ENCODE measurements at regions of chr12 and their contacts with region 1.

Region 1: DNA sequence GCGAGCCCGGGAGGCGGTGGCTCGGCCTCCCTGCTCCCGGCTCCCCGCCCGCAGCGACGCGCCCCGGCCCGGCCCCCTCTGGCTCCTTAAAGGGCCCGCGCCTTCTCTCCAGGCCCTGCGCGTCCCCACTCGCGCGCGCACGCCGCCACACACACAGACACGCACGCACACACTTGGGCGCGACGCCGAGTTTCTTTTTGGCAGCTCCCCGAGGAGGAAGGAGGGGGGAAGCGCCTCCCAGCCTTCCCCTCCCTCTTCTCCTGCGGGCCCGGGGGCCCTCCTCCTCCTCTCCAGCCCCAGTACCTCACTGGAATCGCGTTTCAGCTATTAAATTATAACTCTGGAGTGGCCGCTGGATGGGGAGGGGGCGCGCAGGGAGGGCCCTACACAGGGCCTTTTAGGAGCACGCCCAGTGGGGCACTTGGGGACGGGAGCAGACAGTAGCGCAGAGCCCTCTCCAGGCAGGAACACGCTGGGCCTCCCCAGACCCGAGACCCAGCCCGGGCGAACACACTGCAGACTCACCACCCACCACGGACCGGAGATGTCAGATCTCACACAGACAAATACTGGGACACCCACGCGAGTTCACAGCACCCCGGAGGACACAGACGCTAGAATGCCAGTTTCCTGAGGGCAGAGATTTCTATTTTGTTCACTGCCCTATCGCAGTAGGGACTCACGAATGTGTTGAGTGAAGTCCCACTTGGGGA is 405 bp upstream of the NCOR2 start:
- DNase-seq: peak; percentile 77 to 99 (median 92)

Region 2: DNA sequence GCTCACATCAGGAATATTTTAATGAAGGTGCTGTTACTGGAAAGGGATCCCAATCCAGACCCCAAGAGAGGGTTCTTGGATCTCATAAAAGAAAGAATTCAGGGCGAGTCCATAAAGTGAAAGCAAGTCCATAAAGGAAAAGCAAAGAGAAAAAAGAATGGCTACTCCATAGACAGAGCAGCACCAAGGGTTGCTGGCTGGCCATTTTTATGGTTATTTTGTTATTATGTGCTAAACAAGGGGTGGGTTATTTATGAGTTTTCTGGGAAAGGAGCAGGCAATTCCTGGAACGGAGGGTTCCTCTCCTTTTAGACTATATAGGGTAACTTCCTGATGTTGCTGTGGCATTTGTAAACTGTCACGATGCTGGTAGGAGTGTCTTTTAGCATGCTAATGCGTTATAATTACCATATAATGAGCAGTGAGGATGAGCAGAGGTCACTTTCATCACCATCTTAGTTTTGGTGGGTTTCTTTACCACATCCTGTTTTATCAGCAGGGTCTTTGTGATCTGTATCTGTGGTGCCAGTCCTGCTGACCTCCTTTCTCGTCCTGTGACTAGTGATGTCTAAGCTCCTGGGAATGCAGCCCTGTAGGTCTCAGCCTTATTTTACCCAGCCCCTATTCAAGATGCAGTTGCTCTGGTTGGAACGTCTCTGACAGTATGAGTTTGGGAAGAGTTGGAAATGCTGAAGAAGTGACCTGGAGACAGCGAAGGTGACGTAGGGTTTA is 494.3 kb before region 1 on chr12:
- intact Hi-C with region 1: no loop called
- DNase-seq: no peak

Region 3: DNA sequence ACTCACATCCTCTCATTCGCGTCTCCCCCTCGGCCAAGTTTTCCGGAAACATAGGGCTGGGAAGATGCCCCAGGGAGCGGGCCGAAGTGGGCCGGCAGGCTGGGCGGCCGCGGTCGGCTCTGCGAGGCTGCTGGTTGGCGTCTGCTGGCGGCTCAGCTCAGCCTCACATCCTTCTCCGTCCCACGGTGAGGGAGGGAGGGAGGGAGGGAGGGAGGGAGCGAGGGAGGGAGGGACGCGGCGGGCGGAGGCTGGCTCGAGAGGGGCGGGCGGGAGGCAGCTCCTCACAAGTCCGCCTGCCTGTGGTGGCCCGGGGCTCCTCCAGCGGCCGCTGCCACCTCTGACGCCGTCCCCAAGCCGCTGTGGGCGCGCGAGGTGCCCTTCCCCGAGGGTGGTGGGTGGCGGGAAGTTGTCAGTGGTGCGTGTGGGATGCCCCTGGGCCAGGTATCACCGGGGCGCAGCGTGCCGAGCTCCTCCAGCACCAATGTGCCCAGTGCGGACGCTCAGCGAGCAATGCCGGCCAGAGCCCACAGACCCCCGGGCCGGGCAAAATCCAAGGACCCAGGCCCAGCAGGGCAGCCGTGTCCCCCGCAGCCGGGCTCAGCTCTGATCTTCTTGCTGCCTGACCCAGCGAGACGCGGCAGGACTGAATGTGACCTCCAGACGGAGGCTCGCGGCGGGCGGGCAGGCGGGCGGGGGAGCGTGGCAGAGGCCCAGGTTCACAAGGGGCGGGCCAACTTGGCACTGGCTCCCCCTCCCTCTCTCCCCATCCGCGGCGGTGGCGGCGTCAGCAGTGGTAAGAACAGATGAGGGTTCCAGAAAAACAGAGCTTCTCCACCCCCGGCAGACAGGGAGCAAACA is 178.9 kb before region 1 on chr12:
- intact Hi-C with region 1: loop called (anchors 10 kb)
- DNase-seq: peak; percentile 82 to 98 (median 86)

Region 4: DNA sequence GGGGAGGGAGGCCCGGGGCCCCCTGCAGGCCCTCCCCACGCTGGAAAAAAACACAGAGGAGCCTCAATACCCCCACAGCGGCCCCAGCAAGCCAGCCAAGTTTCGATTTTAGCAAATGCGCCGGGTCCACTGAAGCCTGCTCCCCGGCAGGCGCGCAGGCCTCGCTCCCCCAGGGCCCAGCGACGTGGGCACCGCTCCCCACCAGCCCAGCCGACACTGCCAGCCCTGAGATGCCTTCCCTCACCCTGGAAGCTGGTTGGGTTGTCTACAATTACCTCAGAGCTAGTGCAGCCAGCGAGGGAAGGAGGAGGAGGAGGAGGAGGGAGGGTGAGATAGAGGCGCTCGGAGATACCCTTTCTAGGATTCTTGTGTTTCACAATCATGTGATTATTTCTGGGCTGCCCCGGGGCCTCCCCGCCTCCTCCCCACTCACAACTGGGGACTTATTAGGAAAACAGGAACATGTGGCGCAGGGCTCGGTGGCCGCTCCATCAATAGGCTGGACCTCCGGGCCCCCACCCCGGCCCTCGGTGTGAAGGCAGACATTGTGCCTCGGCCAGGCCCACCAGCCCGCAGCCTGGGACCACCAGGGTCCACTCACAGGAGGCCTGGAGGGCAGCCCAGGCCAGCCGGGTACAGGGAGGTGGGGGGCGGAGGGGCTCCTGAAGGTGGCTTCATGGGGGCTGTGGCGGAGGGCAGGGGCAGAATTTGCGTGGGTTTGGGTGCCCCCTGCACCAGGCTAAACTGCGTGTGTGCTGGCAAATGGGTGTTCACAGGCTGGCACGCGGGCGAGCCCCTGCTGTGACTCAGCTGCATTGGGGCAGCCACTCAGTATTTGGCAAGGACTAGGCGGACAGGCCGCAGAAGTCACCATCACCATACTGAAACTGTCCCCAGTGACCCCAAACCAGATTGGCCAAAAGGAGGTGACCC is 110.3 kb before region 1 on chr12:
- intact Hi-C with region 1: loop called (anchors 5 kb)
- DNase-seq: peak; percentile 65 to 95 (median 72)

Region 5: DNA sequence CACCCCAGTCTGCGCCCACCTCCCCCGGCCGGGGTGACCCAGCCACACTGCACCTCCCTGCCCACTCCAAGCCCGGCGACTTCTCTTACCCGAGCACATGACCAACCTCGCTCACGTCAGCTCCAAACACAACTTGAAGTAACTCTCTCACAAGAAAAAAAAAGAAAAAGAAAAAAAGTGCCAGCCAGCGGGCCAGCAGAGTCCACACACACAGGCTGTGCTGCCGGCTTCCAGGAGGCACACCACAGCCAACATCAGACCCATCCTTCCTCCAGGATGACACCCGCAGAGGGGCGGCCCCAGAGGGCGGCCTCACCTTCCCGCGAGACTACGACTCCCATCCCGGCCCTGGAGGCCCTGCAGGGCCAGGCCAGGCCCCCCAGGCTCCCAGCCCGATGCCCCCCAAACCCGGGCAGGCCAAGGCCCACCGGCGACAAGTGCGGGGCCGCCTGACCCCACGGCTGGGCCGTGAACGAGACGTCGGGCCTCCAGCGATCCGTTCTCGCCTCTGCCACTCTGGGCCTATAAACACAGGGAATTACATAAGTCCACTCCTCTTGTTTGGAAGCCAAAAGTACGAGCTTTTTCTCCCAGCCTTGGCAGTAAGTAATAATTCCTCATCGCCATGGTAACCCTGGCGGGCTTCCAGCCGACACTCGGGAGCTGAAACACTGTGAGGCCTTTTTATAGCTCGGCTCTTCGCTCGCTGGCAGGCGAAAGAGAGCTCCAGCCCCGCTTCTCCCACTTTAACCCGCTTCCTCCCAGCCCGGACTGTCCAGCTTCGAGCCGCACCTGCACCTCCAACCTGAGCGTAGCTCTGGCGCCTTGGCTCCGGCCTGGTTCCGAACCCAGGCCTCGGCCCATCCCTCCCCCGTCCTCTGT is 49.5 kb before region 1 on chr12:
- intact Hi-C with region 1: loop called (anchors 2 kb)
- DNase-seq: peak; percentile 95 to 99 (median 96)

Region 6: DNA sequence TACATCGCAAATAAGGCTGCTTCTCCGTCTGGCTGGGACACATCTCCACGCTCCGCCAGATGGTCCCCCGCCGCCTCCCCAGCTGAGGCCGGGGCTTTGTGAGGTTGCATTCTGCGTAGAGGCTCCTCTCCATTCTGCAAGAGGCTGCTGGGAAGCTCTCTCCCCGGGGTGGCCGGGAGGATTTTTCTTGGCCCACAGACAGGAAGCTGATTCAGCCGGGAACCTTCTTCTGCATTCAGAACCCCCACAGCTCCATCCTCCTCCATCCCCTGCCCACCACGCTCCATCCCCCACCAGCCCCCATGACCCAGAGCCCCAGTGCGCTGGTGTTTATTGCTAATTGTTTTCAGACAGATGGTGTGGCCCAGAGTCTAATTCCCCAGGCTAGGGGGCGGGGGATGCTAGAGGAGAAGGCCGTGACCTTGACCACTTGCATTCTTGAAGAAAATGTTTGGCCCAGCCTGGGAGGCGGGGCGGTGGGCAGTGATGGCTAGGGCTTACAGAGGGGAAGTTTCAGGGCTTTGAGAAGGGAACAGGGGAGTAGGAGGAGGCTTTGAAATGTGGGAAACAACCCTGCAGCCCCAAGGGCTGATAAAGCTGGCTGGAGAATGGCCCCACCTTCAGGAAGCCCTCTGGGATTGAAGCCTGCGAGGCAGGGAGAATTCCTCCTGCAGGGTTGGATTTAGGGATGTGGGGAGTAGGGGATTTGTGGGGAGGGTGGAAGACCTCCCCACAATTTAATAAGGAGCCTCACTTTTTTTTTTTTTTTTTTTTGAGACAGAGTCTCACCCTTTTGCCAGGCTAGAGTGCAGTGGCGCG is 88.1 kb after region 1 on chr12:
- intact Hi-C with region 1: loop called (anchors 2 kb)
- DNase-seq: peak; percentile 72 to 98 (median 81)

Region 7: GRCh38 chr12:124992874-124993625 is 425.2 kb after region 1 on chr12:
- intact Hi-C with region 1: no loop called
- DNase-seq: peak in 5 of 10 donors; percentile 20 to 81 (median 59)

Measured in posterior cingulate gyrus (tissue), 11 donors.